Heart right ventricle (tissue), 16 donors: ENCODE measurements at regions of chr13 and their contacts with region 1.

Region 1: GRCh38 chr13:50006426-50007135 is 8.7 kb upstream of the KCNRG start:
- DNase-seq: no peak
- ATAC-seq: no peak
- H3K4me3 ChIP-seq: no peak overlapping the region
- H3K27ac ChIP-seq: peak overlapping the region in 2 of 10 donors; percentile 1 to 27
- H3K4me1 ChIP-seq: peaks cover 0 to 32% (median 21%) of the 10 kb centered on the region in 9 donors
- H3K27me3 ChIP-seq: no peaks in the 10 kb centered on the region
- CTCF ChIP-seq: no peak

Region 2: DNA sequence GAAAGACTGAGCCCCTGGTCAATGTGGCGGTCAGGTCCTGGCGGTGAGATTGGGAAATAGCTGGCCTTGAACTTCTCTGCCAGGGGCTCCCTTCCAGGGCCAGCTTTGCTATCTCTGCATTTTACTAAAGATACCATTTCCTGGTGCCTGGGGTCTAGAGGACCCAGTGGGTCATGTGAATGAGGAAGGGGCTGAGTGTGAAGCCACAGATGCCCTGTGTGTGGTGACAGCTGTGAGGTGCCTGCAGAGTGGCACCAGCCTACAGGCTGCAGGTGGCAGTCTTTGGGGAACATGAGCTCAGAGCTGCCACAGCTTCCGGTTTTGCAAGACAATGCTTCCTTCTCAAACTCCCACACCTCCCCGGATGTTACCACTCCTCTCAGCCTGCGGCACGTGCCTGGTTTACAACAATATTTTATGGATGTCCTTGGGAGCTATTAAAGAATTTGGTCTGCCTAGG is 791.6 kb before region 1 on chr13:
- intact Hi-C with region 1: no loop called
- DNase-seq: peak in 1 of 2 donors; percentile 25
- ATAC-seq: peak; percentile 26 to 76 (median 46)
- H3K4me3 ChIP-seq: no peak overlapping the region
- H3K27ac ChIP-seq: peak overlapping the region in 1 of 10 donors; percentile 41
- H3K4me1 ChIP-seq: peaks cover 0 to 17% (median 0%) of the 10 kb centered on the region in 9 donors
- H3K27me3 ChIP-seq: peaks cover 0 to 22% (median 20%) of the 10 kb centered on the region in 7 donors
- CTCF ChIP-seq: peak in 2 of 9 donors; percentile 8 to 23

Region 3: GRCh38 chr13:49247643-49248621 is 758.6 kb before region 1 on chr13 and contains the start of gene CDADC1:
- intact Hi-C with region 1: no loop called
- DNase-seq: peak; percentile 98 to 99
- ATAC-seq: peak; percentile 98 to 100 (median 99)
- H3K4me3 ChIP-seq: peak within 1 kb of the TSS; percentile 53 to 93 (median 87)
- H3K27ac ChIP-seq: peak within 1 kb of the TSS; percentile 70 to 95 (median 89)
- H3K4me1 ChIP-seq: peaks cover 4 to 34% (median 18%) of the 10 kb centered on the region in 9 donors
- H3K27me3 ChIP-seq: no peaks in the 10 kb centered on the region
- CTCF ChIP-seq: peak in 3 of 9 donors; percentile 3 to 16 (median 9)
- total RNA-seq, gene CDADC1: 6.6 to 12.7 (median 9.4) TPM

Region 4: GRCh38 chr13:50071379-50071778 is 64.8 kb after region 1 on chr13:
- intact Hi-C with region 1: loop called in 2 of 10 experiments (anchors 2 to 10 kb)
- DNase-seq: no peak
- ATAC-seq: no peak
- H3K4me3 ChIP-seq: no peak overlapping the region
- H3K27ac ChIP-seq: peak overlapping the region in 1 of 10 donors; percentile 31
- H3K4me1 ChIP-seq: peaks cover 0 to 70% (median 15%) of the 10 kb centered on the region in 9 donors
- H3K27me3 ChIP-seq: no peaks in the 10 kb centered on the region
- CTCF ChIP-seq: no peak

Region 5: DNA sequence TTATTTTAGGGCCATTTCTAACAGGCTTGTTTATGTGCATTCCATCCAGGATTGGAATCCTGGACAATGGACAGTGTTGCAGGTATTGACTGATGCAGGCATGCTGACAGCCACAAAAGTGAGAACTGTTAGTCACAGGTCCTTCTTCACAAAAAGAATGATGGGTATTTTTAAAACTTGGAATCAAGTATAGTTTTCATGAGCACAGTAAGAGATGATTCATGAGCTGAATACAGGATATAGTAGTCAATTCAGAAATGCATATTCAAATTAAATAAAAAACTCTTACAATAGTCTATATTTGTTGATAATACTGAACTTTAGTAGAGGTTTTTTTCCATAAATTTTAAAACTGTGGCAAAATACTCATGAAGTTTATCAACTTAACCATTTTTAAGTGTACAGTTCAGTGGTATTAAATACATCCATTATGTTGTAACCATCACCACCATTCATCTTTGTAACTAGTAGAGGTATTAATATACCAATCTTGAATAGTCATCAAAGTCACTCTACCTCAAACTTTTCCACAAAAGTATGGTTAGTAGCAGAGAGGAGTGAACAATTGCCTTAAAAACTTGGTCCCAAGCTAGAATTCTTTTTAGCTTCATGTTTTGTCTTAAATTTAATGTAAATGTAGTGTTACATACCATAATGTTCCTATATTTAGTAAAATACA is 88.2 kb after region 1 on chr13:
- intact Hi-C with region 1: loop called in 1 of 10 experiments (anchors 10 kb)
- DNase-seq: no peak
- ATAC-seq: no peak
- H3K4me3 ChIP-seq: no peak overlapping the region
- H3K27ac ChIP-seq: no peak overlapping the region
- H3K4me1 ChIP-seq: peaks cover 0 to 45% (median 22%) of the 10 kb centered on the region in 9 donors
- H3K27me3 ChIP-seq: no peaks in the 10 kb centered on the region
- CTCF ChIP-seq: no peak